Activated naive CD4-positive, alpha-beta T cell treated with anti-CD3 and anti-CD28 coated beads, Interleukin-2, amount 10 ng/mL, durations not matched to agents 7 days and 5 days (primary cell): ENCODE measurements at regions of chr6 and their contacts with region 1.

Region 1: DNA sequence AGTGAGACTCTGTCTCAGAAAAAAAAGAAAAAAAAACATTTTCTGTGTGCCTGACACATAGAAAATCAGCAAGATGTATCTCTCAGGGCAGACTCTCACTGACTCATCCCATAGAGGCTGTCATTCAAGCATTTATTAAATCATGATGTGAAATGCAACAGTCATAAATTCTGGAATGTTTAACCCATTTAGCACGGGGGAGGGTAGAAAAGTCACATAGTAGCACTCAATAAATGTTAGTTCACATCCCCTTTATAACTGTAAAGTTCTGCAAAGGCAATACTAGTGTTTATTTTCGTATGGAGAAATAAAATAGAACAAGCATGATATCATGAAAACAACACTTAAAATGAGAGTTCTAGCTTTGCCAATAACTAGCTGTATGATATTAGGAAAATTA is 15.5 kb upstream of the CARMIL1 start:
- DNase-seq: no peak
- H3K4me3 Mint-ChIP-seq: no peak overlapping the region
- H3K27ac Mint-ChIP-seq: no peak overlapping the region
- H3K4me1 Mint-ChIP-seq: peaks cover 2% of the 10 kb centered on the region
- H3K27me3 Mint-ChIP-seq: peaks cover 12% of the 10 kb centered on the region

Region 2: GRCh38 chr6:25017932-25018567 is 245.6 kb before region 1 on chr6:
- CTCF ChIA-PET with region 1: no interaction called
- DNase-seq: peak; percentile 90
- H3K4me3 Mint-ChIP-seq: peak overlapping the region; percentile 17
- H3K27ac Mint-ChIP-seq: peak overlapping the region; percentile 33
- H3K4me1 Mint-ChIP-seq: peaks cover 52% of the 10 kb centered on the region
- H3K27me3 Mint-ChIP-seq: no peaks in the 10 kb centered on the region

Region 3: DNA sequence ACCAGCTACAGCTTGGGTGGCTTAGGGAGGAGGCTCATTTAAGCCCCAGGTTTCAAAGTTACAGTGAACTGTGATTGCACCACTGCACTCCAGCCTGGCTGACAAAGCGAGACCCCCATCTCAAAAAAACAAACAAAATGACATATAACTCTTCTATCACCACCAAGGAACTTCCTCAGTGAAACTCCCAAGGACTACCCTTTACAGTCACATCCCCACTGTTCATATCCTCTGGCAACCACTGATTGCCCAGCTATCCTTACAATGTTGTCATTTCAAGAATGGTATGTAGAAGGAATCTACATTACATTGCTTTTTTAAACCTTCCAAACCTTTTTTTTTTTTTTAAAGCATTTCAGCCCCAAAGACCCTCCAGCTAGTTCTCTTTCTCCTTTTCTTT is 107.6 kb before region 1 on chr6:
- CTCF ChIA-PET with region 1: no interaction called
- DNase-seq: no peak
- H3K4me3 Mint-ChIP-seq: no peak overlapping the region
- H3K27ac Mint-ChIP-seq: no peak overlapping the region
- H3K4me1 Mint-ChIP-seq: peaks cover 7% of the 10 kb centered on the region
- H3K27me3 Mint-ChIP-seq: no peaks in the 10 kb centered on the region

Region 4: GRCh38 chr6:25223490-25223991 is 40.1 kb before region 1 on chr6:
- CTCF ChIA-PET with region 1: interaction called, 15 read pairs
- DNase-seq: peak; percentile 73
- H3K4me3 Mint-ChIP-seq: peak overlapping the region; percentile 31
- H3K27ac Mint-ChIP-seq: no peak overlapping the region
- H3K4me1 Mint-ChIP-seq: peaks cover 13% of the 10 kb centered on the region
- H3K27me3 Mint-ChIP-seq: peaks cover 6% of the 10 kb centered on the region

Region 5: GRCh38 chr6:25250878-25251277 is 12.8 kb before region 1 on chr6:
- CTCF ChIA-PET with region 1: interaction called, 11 read pairs
- DNase-seq: no peak
- H3K4me3 Mint-ChIP-seq: no peak overlapping the region
- H3K27ac Mint-ChIP-seq: no peak overlapping the region
- H3K4me1 Mint-ChIP-seq: peaks cover 3% of the 10 kb centered on the region
- H3K27me3 Mint-ChIP-seq: no peaks in the 10 kb centered on the region

Region 6: GRCh38 chr6:25490018-25490801 is 226.6 kb after region 1 on chr6:
- CTCF ChIA-PET with region 1: interaction called, 90 read pairs
- DNase-seq: peak; percentile 81
- H3K4me3 Mint-ChIP-seq: no peak overlapping the region
- H3K27ac Mint-ChIP-seq: no peak overlapping the region
- H3K4me1 Mint-ChIP-seq: peaks cover 7% of the 10 kb centered on the region
- H3K27me3 Mint-ChIP-seq: no peaks in the 10 kb centered on the region

Region 7: DNA sequence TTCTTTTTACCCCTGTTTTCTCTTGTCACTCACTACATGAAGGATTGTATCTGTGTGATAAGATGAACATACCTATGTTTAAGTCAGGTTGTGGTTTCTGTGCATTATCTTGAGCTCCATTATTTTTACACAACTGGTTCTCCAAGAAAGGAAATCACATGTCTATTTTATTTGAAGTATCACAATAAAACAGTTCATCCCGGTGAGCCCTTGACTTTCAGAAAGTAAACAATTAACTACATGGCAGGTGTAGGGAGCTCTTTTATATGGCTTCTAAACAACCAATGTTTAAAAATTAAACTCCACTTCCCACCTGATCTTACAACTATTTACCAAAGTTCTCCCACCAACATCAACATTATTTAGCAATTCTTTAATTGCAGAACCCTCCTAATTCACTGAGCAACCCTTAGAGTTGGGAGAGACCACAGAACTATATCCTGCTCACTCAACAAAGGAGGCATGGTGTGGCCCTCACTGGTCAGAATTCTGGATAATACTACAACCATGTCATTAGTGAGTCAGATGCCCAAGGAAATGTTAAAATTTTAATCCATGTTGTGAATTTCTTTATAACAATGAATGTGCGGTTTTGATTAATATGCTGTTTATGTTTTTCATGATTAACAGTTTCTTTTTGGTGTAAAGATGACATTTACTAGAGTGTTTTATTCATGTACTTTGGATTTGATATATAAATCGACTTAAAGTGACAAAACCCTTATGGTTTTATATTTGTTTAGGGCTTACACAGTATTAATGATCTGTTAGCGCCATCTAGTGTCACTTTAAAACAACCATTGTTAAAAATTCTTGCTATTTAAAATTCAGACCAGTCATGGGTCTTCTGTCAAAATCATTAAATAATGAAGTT is 338.4 kb after region 1 on chr6:
- CTCF ChIA-PET with region 1: interaction called, 21 read pairs
- DNase-seq: no peak
- H3K4me3 Mint-ChIP-seq: no peak overlapping the region
- H3K27ac Mint-ChIP-seq: no peak overlapping the region
- H3K4me1 Mint-ChIP-seq: peaks cover 5% of the 10 kb centered on the region
- H3K27me3 Mint-ChIP-seq: no peaks in the 10 kb centered on the region